A673 (cell line): ENCODE measurements at regions of chr15 and their contacts with region 1.

Region 1: DNA sequence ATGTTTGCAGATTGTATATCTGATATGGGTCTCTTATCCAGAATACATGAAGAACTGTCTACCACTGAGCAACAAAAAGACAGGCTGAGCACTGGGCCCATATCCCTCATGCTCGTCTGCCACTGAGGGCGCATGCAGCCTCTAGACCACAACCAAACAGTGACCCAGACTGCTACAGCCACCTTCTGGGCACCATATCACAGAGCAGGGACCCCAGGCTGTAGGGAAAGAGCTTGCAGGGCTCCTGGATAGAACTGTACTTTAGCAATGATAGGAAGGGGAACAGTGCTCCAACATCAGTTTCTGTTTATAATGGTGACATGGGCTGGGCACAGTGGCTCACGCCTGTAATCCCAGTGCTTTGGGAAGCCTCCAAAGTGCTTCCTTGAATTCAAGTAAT is 40.2 kb upstream of the TMEM87A start:
- DNase-seq: no peak
- H3K4me3 ChIP-seq: no peak overlapping the region
- H3K27ac ChIP-seq: no peak overlapping the region
- H3K4me1 ChIP-seq: peaks cover 6% of the 10 kb centered on the region
- H3K27me3 ChIP-seq: no peaks in the 10 kb centered on the region
- CTCF ChIP-seq: no peak

Region 2: DNA sequence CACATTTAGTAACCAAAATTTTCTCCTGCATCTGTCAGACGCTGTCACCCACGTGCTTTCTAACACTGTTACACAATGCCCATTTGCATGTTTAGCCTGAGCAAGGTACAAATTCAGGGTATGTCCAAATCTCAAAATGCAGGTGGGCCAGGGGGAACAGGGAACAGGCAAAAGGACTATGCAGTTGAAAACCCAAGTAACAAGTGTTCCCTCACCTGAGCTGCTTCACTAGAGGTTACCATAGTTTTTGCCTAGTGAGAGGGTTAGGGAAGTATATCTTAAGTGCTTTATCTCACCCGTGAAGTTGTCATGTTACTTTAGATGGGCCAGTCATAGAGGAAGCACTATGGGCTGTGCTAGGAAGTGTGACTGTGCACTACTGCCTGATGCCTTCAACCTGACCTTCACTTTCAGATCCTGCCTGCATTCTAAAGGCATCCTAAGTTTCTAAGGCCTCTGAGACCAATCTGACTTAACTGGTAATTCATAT is 34.2 kb before region 1 on chr15:
- CTCF ChIA-PET with region 1: no interaction called
- POLR2A ChIA-PET with region 1: no interaction called
- intact Hi-C with region 1: no loop called
- DNase-seq: no peak
- H3K4me3 ChIP-seq: no peak overlapping the region
- H3K27ac ChIP-seq: no peak overlapping the region
- H3K4me1 ChIP-seq: peaks cover 8% of the 10 kb centered on the region
- H3K27me3 ChIP-seq: no peaks in the 10 kb centered on the region
- CTCF ChIP-seq: no peak

Region 3: DNA sequence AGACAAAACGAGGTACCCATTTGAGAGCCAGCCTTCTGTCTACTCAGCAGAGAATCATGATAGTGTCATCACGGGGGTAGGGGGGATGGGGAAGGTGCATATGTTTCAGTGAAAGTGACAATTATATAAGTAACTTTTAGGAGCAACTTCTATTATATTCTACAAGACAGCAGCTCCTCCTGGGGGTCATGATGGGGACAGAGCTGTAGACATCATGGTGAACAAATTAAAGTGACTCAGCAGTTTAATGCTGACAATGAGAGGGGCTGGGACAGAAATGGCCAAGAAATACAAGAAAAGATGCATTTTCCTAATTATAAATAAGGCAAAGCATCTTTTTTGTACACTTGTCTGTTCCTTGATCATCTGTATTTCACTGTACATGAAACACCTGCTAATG is 57.7 kb after region 1 on chr15:
- CTCF ChIA-PET with region 1: no interaction called
- POLR2A ChIA-PET with region 1: no interaction called
- intact Hi-C with region 1: loop called (anchors 10 kb)
- DNase-seq: peak; percentile 37
- H3K4me3 ChIP-seq: no peak overlapping the region
- H3K27ac ChIP-seq: no peak overlapping the region
- H3K4me1 ChIP-seq: no peaks in the 10 kb centered on the region
- H3K27me3 ChIP-seq: no peaks in the 10 kb centered on the region
- CTCF ChIP-seq: no peak

Region 4: DNA sequence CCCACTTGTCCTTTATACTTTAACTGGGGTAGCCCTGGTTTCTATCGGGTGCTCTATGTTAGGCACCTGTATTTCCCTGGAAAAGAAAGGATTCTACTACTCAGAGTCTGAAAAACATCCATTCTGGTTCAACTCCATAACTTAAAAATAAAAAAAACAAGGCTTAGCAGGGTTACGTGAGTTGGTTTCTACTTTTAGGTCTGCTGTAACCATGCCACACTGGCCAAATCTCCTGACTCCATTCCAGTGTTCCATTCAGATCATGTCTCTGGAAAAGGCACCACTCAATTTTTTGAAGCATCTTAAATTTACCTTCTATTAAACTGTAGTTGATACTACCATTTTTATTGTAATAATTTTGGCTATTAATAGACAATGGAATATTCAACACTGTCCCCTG is 107.9 kb after region 1 on chr15:
- CTCF ChIA-PET with region 1: no interaction called
- POLR2A ChIA-PET with region 1: no interaction called
- intact Hi-C with region 1: no loop called
- DNase-seq: no peak
- H3K4me3 ChIP-seq: no peak overlapping the region
- H3K27ac ChIP-seq: no peak overlapping the region
- H3K4me1 ChIP-seq: no peaks in the 10 kb centered on the region
- H3K27me3 ChIP-seq: no peaks in the 10 kb centered on the region
- CTCF ChIP-seq: no peak